Vagina (tissue), 2 donors: ENCODE measurements at regions of chrX and their contacts with region 1.

Region 1: DNA sequence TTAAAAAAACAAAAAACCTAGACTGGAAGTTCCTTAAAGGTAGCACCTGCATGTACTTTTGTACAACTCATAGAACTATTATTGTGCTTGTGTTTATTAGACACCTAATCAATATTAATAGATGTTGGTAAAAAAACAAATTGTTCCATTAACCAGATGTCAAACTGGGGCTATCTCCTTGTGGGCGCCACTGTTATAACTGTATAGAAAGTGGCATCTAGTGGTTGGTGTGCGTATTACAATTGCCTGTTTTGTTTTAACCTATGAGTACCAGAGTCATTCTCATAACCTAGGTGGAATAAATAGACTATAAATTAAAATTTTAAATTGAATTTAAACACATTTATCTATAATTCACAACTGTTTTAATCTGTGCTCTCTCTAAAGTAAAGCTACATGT is 97.4 kb downstream of the COL4A5 start:
- DNase-seq: no peak
- H3K4me3 ChIP-seq: no peak overlapping the region
- H3K27ac ChIP-seq: no peak overlapping the region
- H3K4me1 ChIP-seq: no peaks in the 10 kb centered on the region
- H3K27me3 ChIP-seq: no peaks in the 10 kb centered on the region
- CTCF ChIP-seq: peak in 2 of 3 experiments; percentile 35 to 53
- POLR2A ChIP-seq: no peak

Region 2: GRCh38 chrX:106626789-106627188 is 1910.2 kb before region 1 on chrX:
- intact Hi-C with region 1: no loop called
- DNase-seq: no peak
- H3K4me3 ChIP-seq: no peak overlapping the region
- H3K27ac ChIP-seq: no peak overlapping the region
- H3K4me1 ChIP-seq: no peaks in the 10 kb centered on the region
- H3K27me3 ChIP-seq: no peaks in the 10 kb centered on the region
- CTCF ChIP-seq: no peak
- POLR2A ChIP-seq: no peak

Region 3: GRCh38 chrX:108199691-108200090 is 337.3 kb before region 1 on chrX:
- intact Hi-C with region 1: loop called (anchors 5 kb)
- DNase-seq: peak in 1 of 2 donors; percentile 67
- H3K4me3 ChIP-seq: no peak overlapping the region
- H3K27ac ChIP-seq: peak overlapping the region; percentile 38
- H3K4me1 ChIP-seq: no peaks in the 10 kb centered on the region
- H3K27me3 ChIP-seq: no peaks in the 10 kb centered on the region
- CTCF ChIP-seq: peak in 1 of 3 experiments; percentile 50
- POLR2A ChIP-seq: no peak